ENCODE measurements at regions of chr3 and their contacts with region 1.

Region 1: DNA sequence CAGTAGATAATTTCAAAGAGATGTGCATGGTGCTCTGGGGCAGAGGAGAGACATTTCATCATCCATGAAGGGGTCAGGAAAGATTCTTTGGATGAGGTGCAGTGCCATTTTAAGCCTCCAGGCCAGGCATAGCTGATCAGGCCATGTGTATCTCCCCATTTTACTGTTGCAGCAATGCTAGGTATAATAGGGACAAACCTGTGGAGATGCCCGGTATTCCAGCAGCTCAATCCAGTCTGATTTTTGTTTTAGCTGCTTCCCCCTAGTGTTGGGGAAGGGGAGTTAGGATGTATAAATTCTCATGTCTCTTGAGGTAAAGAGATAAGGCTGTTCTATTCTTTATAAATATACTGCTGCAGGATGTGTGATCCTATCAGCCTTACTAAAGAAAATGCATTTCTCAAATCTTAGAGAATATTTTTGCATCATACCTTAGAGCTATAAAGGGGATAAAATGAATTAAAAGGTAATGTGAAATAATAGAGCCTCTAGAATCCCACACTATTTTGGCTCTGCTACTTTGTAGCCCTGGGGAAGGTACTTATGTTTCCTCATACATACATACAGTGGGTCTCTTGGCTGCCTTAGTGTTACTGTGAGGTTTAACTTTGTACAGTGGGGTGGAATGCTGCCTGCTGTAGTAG is 5.2 kb downstream of the CDV3 start:
- DNase-seq: peak; percentile 59
- ATAC-seq: peak; percentile 69
- H3K4me3 ChIP-seq: no peak overlapping the region
- H3K27ac ChIP-seq: 0 out of 2 replicates have a peak overlapping the region, but pooled peaks have one; percentile 18
- H3K4me1 ChIP-seq: peaks cover 4 to 26% of the 10 kb centered on the region in 2 experiments; a peak in 3 of 4 replicates
- H3K27me3 ChIP-seq: no peaks in the 10 kb centered on the region
- CTCF ChIP-seq: peak; percentile 62 to 74 (median 63); a peak in 5 of 6 replicates
- POLR2A ChIP-seq: no peak
- RAD21 ChIP-seq: peak; percentile 70

Region 2: GRCh38 chr3:133256787-133257483 is 321.7 kb before region 1 on chr3:
- CTCF ChIA-PET with region 1: no interaction called
- POLR2A ChIA-PET with region 1: no interaction called
- RAD21 ChIA-PET with region 1: no interaction called
- intact Hi-C with region 1: no loop called
- DNase-seq: no peak
- ATAC-seq: no peak
- H3K4me3 ChIP-seq: no peak overlapping the region
- H3K27ac ChIP-seq: no peak overlapping the region
- H3K4me1 ChIP-seq: no peaks in the 10 kb centered on the region
- H3K27me3 ChIP-seq: 0 out of 2 replicates have a peak, but pooled peaks cover 12% of the 10 kb centered on the region
- CTCF ChIP-seq: no peak
- POLR2A ChIP-seq: no peak
- RAD21 ChIP-seq: no peak

Region 3: GRCh38 chr3:133464573-133464972 is 114.1 kb before region 1 on chr3:
- CTCF ChIA-PET with region 1: interaction called, 12 read pairs
- POLR2A ChIA-PET with region 1: interaction called, 3 read pairs
- RAD21 ChIA-PET with region 1: interaction called in 1 of 2 experiments, 3 read pairs
- intact Hi-C with region 1: loop called (anchors 1 kb)
- DNase-seq: no peak
- ATAC-seq: peak; percentile 85
- H3K4me3 ChIP-seq: no peak overlapping the region
- H3K27ac ChIP-seq: no peak overlapping the region
- H3K4me1 ChIP-seq: no peaks in the 10 kb centered on the region
- H3K27me3 ChIP-seq: no peaks in the 10 kb centered on the region
- CTCF ChIP-seq: peak; percentile 34 to 48 (median 42); a peak in 4 of 6 replicates
- POLR2A ChIP-seq: no peak
- RAD21 ChIP-seq: peak; percentile 58

Region 4: DNA sequence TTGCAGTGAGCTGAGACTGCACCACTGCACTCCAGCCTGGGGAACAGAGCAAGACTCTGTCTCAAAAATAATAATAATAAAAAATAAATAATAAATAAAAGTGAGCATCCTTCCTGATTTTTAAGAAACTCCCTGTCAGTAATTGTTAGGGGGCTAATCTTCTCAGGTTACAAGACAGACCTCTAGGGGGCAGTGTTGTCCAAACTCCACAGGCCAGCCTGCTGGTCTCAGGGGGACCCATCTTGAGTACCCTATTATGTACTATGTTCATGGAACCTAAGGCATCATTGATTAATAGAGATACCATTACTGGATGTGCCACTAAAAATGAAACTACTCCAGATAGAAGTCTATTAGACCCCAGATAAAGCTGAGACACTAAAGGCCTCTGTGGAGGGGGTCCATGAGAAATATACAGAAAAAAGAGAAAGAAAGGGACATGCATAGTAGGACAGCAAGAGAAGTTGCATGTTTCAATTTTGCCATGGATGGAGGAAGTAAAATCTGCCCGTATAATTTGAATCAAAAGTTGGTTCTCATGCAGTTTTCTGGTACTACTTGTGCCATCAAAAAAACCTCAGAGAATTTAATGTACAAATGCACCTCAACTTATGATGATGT is 90.6 kb before region 1 on chr3:
- CTCF ChIA-PET with region 1: interaction called, 3 read pairs
- POLR2A ChIA-PET with region 1: interaction called, 3 read pairs
- RAD21 ChIA-PET with region 1: no interaction called
- intact Hi-C with region 1: loop called (anchors 2 kb)
- DNase-seq: no peak
- ATAC-seq: no peak; the same call in 1 of the 2 replicates
- H3K4me3 ChIP-seq: no peak overlapping the region
- H3K27ac ChIP-seq: no peak overlapping the region
- H3K4me1 ChIP-seq: peaks cover 0 to 9% of the 10 kb centered on the region in 2 experiments; a peak in 2 of 4 replicates
- H3K27me3 ChIP-seq: no peaks in the 10 kb centered on the region
- CTCF ChIP-seq: peak; percentile 18 to 52 (median 34); a peak in 5 of 6 replicates
- POLR2A ChIP-seq: no peak
- RAD21 ChIP-seq: peak; percentile 47

Region 5: DNA sequence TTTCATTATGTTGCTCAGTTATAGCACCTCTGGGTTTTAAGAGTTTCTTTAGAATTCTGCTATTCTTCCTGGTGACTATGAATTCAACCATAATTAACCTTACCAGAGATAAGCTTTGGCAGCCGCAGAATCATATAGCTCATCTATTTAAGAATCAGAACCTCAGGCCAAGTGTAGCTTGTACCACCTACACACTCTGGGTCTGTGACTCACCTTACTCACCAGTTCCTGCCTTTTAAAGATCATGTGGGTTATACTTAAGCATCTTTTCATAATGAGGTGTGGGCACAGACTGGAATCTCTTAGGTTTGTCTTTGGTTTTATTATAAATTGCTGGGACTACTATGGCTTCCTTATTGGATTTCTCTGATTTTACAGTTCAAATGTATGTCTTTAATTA is 16.7 kb after region 1 on chr3:
- CTCF ChIA-PET with region 1: no interaction called
- POLR2A ChIA-PET with region 1: no interaction called
- RAD21 ChIA-PET with region 1: no interaction called
- intact Hi-C with region 1: no loop called
- DNase-seq: no peak
- ATAC-seq: peak; percentile 32; the same call in 1 of the 2 replicates
- H3K4me3 ChIP-seq: no peak overlapping the region
- H3K27ac ChIP-seq: no peak overlapping the region
- H3K4me1 ChIP-seq: peaks cover 6 to 21% of the 10 kb centered on the region in 2 experiments; a peak in 3 of 4 replicates
- H3K27me3 ChIP-seq: no peaks in the 10 kb centered on the region
- CTCF ChIP-seq: no peak
- POLR2A ChIP-seq: no peak
- RAD21 ChIP-seq: no peak

Region 6: DNA sequence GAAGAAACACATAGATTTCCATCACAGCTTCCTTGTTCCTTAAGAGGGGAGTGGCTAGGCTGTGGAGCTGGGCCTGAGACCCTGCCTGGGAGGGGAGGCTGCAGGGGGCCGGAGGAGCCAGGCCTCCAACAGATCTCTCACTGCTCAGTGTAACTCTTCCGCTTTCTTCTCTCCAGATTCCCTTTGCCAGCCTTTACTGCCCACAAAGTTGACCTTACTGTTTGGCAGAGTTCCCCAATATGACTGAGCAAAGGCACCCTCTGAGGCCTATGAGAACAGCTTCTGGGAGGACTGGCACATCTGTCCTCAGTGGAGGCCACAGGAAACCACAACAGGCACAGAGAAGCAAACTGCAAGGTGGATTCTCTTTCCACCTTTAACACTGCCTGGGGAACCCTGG is 413.0 kb after region 1 on chr3:
- CTCF ChIA-PET with region 1: no interaction called
- POLR2A ChIA-PET with region 1: no interaction called
- RAD21 ChIA-PET with region 1: no interaction called
- intact Hi-C with region 1: no loop called
- DNase-seq: no peak
- ATAC-seq: no peak
- H3K4me3 ChIP-seq: no peak overlapping the region
- H3K27ac ChIP-seq: no peak overlapping the region
- H3K4me1 ChIP-seq: peaks cover 0 to 12% of the 10 kb centered on the region in 2 experiments; a peak in 1 of 4 replicates
- H3K27me3 ChIP-seq: peaks cover 4% of the 10 kb centered on the region; the same call in 1 of the 2 replicates
- CTCF ChIP-seq: no peak
- POLR2A ChIP-seq: no peak
- RAD21 ChIP-seq: no peak

Measured in HCT116 (cell line).